Sigmoid colon (tissue), 7 donors: ENCODE measurements at regions of chr6 and their contacts with region 1.

Region 1: DNA sequence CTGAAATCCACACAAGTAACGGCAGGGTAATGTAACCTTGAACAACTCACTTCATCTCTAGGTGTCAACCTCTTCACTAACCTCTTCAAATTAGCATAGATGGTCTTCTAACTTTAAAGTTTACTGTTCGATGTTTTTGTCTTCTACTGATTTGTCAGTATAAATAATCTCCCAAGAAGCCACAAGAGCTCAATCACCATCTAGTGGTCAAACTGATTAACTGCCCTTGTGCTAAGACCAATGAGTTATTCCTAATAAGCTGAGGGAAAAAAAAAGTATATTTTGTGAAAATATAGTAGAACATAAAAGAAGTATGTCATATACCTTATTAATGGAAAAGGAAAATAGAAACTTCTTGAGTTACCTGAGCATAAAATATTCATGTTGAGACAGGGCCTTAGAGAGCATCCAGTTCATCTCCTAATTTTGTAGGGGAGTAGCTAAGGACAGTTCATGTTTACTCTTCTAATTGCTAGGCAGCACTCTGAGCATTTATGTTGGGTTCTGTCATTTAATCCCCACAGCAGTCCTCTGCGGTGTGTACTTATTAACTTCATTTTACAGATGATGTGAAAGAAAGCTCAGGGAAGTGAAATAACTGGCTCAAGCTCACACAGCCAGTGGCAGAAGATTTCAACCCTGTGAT is 317.1 kb downstream of the ESR1 start:
- DNase-seq: no peak
- H3K4me3 ChIP-seq: no peak overlapping the region
- H3K27ac ChIP-seq: no peak overlapping the region
- H3K4me1 ChIP-seq: peaks cover 0 to 6% (median 0%) of the 10 kb centered on the region in 4 donors
- H3K27me3 ChIP-seq: no peaks in the 10 kb centered on the region
- CTCF ChIP-seq: peak in 3 of 4 experiments; percentile 56 to 64 (median 57)
- EP300 ChIP-seq: no peak
- POLR2A ChIP-seq: no peak

Region 2: GRCh38 chr6:151675746-151676416 is 448.7 kb before region 1 on chr6:
- intact Hi-C with region 1: loop called (anchors 5 kb)
- DNase-seq: no peak
- H3K4me3 ChIP-seq: no peak overlapping the region
- H3K27ac ChIP-seq: no peak overlapping the region
- H3K4me1 ChIP-seq: no peaks in the 10 kb centered on the region
- H3K27me3 ChIP-seq: no peaks in the 10 kb centered on the region
- CTCF ChIP-seq: peak in 3 of 4 experiments; percentile 22 to 54 (median 39)
- EP300 ChIP-seq: no peak
- POLR2A ChIP-seq: no peak

Region 3: DNA sequence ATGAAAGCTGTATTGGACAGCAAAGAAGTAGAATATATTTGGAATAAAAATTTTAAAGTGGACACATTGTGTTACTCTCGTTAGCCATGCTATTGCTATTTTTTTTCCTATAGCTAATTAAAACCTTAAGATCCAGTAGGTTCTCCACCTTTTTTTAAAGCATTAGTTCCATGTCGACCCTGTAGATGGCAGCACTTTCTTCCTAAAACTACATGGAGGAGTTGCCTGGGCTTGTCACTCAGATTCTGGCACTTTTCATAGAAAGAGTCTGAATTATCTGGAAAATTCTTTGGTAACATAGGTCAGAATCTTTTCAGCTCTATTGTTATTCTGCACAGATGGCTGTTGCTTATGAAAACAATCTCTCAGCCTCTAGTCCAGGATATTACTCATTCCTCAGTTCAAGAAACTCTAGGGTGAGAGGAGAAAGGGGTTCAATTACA is 359.1 kb before region 1 on chr6:
- intact Hi-C with region 1: loop called (anchors 10 kb)
- DNase-seq: no peak
- H3K4me3 ChIP-seq: no peak overlapping the region
- H3K27ac ChIP-seq: no peak overlapping the region
- H3K4me1 ChIP-seq: no peaks in the 10 kb centered on the region
- H3K27me3 ChIP-seq: no peaks in the 10 kb centered on the region
- CTCF ChIP-seq: peak in 3 of 4 experiments; percentile 36 to 57 (median 53)
- EP300 ChIP-seq: no peak
- POLR2A ChIP-seq: no peak